ENCODE measurements at regions of chr19 and their contacts with region 1.

Region 1: DNA sequence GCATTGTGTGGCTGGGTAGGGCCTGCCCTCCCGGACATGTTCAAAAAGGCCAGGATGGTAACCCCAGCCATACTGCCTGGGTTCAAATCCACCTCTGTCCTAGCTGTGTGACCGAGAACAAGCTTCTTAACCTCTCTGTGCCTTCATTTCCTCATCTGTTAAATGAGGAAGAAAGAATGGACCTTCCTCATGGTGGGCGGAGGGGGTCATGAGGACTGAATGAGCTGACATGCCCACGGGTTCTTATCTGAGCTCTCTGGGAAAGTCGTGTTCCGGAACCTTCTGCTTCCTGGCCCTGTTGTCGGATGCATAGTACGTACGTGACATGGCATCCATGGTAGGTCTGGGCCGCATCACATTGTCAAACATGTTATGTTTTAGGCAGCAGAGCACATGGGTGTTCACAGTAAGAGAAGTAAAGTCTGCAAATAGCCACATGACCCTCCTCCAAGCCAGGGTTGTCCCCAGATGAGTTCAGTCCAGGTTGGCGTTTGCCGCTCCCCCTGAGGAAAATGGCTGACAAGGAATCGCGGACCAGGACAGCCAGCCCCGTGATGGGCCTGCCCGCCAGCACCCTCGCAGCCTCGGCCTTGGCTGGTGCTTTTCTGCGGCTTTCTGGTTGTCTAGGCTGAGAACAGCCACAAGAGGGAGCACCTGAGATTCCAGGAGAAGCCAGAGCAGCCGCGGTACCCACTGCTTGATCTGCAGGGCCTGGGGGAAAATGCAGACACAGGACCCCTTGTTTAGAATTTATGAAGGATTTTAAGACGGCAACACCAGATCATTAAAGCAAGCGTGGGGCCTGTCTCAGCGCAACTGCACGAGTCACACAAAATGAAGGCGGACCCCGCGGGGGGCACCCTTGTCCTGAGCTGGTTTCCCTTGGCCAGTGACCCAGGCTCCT is 2.4 kb upstream of the NTN5 start:
- DNase-seq: peak; percentile 86 to 88 (median 86)
- ATAC-seq: peak; percentile 92
- H3K4me3 ChIP-seq: no peak overlapping the region
- H3K27ac ChIP-seq: no peak overlapping the region
- H3K4me1 ChIP-seq: peaks cover 13 to 64% of the 10 kb centered on the region in 2 experiments; a peak in 4 of 5 replicates
- H3K27me3 ChIP-seq: no peaks in the 10 kb centered on the region
- CTCF ChIP-seq: peak; percentile 90 to 92 (median 92)
- EP300 ChIP-seq: no peak
- POLR2A ChIP-seq: no peak
- RAD21 ChIP-seq: peak; percentile 80 to 88

Region 2: GRCh38 chr19:48618916-48619691 is 56.1 kb before region 1 on chr19 and contains the starts of genes RPL18 and SPHK2:
- CTCF ChIA-PET with region 1: no interaction called
- POLR2A ChIA-PET with region 1: no interaction called
- in situ Hi-C with region 1: no loop called
- intact Hi-C with region 1: no loop called
- DNase-seq: peak; percentile 91 to 99 (median 94)
- ATAC-seq: peak; percentile 84
- H3K4me3 ChIP-seq: peak within 1 kb of the TSS; percentile 64
- H3K27ac ChIP-seq: peak within 1 kb of the TSS; percentile 78
- H3K4me1 ChIP-seq: peaks cover 36 to 58% of the 10 kb centered on the region in 2 experiments; a peak in 4 of 5 replicates
- H3K27me3 ChIP-seq: no peaks in the 10 kb centered on the region
- CTCF ChIP-seq: peak in 1 of 3 experiments; percentile 2; a peak in 1 of 6 replicates
- EP300 ChIP-seq: peak; percentile 69
- POLR2A ChIP-seq: peak; percentile 99
- RAD21 ChIP-seq: no peak; a peak in 1 of 4 replicates
- polyA plus RNA-seq, gene RPL18: 312 to 402 TPM
- polyA plus RNA-seq, gene SPHK2: 0.10 to 0.17 TPM

Region 3: DNA sequence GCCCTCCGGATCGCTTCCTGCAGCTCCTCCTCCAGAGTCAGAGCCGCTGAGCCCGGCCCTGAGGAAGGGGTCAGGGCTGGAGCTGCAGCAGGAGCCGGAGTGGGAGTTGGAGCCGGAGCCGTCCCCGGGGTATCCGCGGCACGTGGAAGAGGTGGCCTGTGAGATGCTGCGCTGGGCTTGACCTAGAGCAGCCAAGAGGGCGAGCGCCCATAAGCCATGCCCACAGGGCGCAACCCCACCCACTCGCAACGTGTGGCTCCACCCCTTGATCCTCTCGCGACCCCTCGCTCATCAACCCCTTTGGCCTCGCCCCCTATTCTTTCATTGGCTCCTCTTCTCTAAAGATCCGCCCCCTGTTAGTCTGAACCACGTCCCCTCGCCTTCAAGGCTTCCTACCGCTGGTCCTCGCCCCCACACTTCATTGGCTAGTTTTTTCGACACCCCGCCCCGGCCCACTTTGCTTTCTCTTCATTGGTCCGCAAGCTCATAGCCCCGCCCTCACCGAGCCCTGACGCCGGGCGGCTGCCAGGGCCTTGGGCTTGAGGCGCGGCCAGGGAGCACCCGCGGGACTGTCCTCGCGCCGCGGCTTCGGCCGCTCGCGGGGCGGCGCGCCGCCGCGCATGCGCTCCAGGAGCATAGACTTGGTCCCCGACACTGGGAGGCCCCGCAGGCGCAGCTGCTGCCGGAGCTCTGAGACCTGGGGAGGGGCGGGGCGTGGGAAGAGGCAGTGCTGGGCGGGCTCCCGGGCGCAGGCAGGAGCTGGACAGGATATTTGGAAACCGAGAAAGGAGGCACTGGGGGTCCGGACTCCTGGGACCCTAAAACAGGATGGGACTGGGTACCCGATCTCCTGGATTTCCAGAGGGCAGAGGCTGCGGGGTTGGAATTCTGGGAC is 38.9 kb after region 1 on chr19:
- CTCF ChIA-PET with region 1: no interaction called
- POLR2A ChIA-PET with region 1: interaction called, 4 read pairs
- in situ Hi-C with region 1: no loop called
- intact Hi-C with region 1: loop called (anchors 2 kb)
- DNase-seq: peak; percentile 98 to 99 (median 98)
- ATAC-seq: peak; percentile 97
- H3K4me3 ChIP-seq: peak overlapping the region; percentile 73
- H3K27ac ChIP-seq: peak overlapping the region; percentile 70
- H3K4me1 ChIP-seq: peaks cover 18 to 45% of the 10 kb centered on the region in 2 experiments
- H3K27me3 ChIP-seq: no peaks in the 10 kb centered on the region
- CTCF ChIP-seq: peak in 2 of 3 experiments; percentile 31 to 36; a peak in 3 of 6 replicates
- EP300 ChIP-seq: no peak
- POLR2A ChIP-seq: peak; percentile 39; the same call in 1 of the 2 replicates
- RAD21 ChIP-seq: no peak

Region 4: GRCh38 chr19:48724796-48725753 is 49.9 kb after region 1 on chr19:
- CTCF ChIA-PET with region 1: no interaction called
- POLR2A ChIA-PET with region 1: no interaction called
- in situ Hi-C with region 1: no loop called
- intact Hi-C with region 1: no loop called
- DNase-seq: peak; percentile 71 to 81 (median 76)
- ATAC-seq: peak; percentile 76
- H3K4me3 ChIP-seq: no peak overlapping the region
- H3K27ac ChIP-seq: peak overlapping the region; percentile 87
- H3K4me1 ChIP-seq: peaks cover 12 to 29% of the 10 kb centered on the region in 2 experiments; a peak in 4 of 5 replicates
- H3K27me3 ChIP-seq: no peaks in the 10 kb centered on the region
- CTCF ChIP-seq: no peak
- EP300 ChIP-seq: no peak
- POLR2A ChIP-seq: peak; percentile 43
- RAD21 ChIP-seq: no peak

Region 5: DNA sequence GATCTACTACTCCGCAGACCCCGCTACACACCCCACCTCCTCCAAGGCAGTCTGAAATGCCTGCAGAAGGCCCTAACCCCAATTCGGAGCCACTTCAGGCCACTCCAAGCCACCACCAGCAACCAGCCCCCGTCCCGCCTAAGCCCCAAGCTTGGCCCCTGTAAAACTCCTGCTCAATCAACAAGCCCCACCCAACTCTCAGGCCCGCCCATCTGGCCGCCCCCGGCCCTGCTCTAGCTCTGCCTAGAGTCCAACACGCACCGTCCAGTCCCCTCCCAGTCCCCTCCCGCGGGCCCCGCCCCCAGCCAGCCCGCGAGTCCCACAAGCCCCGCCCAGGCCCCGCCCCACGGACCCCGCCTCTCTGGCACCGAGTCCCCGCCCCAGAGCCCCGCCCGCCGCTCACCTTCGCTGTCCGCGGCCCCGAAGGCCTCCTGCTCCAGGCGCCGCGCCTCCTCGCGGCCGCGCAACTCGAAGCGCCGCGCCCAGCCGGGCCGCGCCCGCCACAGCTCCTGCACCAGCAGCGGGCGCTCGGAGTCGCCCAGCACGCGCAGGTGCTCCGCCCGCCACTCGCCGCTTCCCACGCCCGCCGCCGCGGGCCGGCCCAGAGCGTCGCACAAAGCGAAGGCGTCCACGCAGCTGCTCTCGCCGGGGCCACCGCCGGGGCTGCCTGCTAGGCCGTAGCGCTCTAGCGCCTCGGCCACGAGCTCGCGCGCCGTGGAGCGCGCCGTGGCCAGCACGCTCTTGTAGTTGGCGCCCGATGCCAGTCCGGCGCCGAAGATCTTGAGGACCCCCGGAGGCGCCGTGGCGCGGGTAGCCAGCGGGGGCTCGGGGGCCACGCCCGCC is 63.6 kb after region 1 on chr19:
- CTCF ChIA-PET with region 1: interaction called, 5 read pairs
- POLR2A ChIA-PET with region 1: no interaction called
- in situ Hi-C with region 1: no loop called
- intact Hi-C with region 1: loop called (anchors 1 kb)
- DNase-seq: peak; percentile 97 to 99 (median 98)
- ATAC-seq: peak; percentile 86
- H3K4me3 ChIP-seq: peak overlapping the region; percentile 53
- H3K27ac ChIP-seq: peak overlapping the region; percentile 83
- H3K4me1 ChIP-seq: peaks cover 43 to 56% of the 10 kb centered on the region in 2 experiments
- H3K27me3 ChIP-seq: no peaks in the 10 kb centered on the region
- CTCF ChIP-seq: peak in 2 of 3 experiments; percentile 88 to 98; a peak in 5 of 6 replicates
- EP300 ChIP-seq: peak; percentile 29; the same call in 1 of the 2 replicates
- POLR2A ChIP-seq: peak; percentile 77
- RAD21 ChIP-seq: peak; percentile 81 to 91

Measured in K562 (cell line).